ENCODE measurements at regions of chr15 and their contacts with region 1.

Region 1: GRCh38 chr15:49235446-49236124 is 65.5 kb downstream of the GALK2 start:
- DNase-seq: peak in 7 of 10 donors; percentile 19 to 75 (median 44)
- H3K4me3 ChIP-seq: peak overlapping the region in 33 of 59 donors; percentile 3 to 49 (median 23)
- H3K27ac ChIP-seq: peak overlapping the region in 56 of 59 donors; percentile 8 to 86 (median 72)
- H3K27me3 ChIP-seq: no peaks in the 10 kb centered on the region
- CTCF ChIP-seq: peak; percentile 62 to 98 (median 86)

Region 2: DNA sequence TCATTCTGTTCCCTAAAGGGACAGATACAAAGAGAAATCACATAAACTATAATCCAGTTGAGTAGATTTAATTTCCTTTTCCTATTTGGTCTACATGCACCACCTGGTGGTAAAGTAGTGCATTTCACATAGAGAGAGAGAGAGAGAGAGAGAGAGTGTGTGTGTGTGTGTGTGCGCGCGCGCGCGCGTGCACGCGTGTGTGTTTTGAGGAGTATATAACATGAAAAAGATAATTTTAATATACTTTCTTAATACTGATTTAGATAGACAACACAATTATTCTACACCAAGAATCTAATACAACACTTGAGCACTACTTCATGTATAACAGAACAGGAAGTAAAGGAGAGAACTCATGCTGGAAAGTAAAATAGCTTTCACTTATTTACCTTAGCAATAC is 186.4 kb after region 1 on chr15:
- intact Hi-C with region 1: loop called (anchors 2 kb)
- DNase-seq: peak in 2 of 10 donors; percentile 27 to 29
- H3K4me3 ChIP-seq: peak overlapping the region in 39 of 59 donors; percentile 1 to 59 (median 29)
- H3K27ac ChIP-seq: peak overlapping the region in 1 of 59 donors; percentile 24
- H3K27me3 ChIP-seq: peaks cover 0 to 4% (median 0%) of the 10 kb centered on the region in 45 donors
- CTCF ChIP-seq: peak; percentile 35 to 93 (median 74)

Region 3: GRCh38 chr15:49901996-49902684 is 666.6 kb after region 1 on chr15:
- intact Hi-C with region 1: loop called in 1 of 2 experiments (anchors 5 kb)
- DNase-seq: no peak
- H3K4me3 ChIP-seq: peak overlapping the region in 13 of 59 donors; percentile 2 to 56 (median 18)
- H3K27ac ChIP-seq: peak overlapping the region; percentile 72 to 96 (median 90)
- H3K27me3 ChIP-seq: no peaks in the 10 kb centered on the region
- CTCF ChIP-seq: peak in 51 of 56 donors; percentile 21 to 68 (median 46)

Region 4: DNA sequence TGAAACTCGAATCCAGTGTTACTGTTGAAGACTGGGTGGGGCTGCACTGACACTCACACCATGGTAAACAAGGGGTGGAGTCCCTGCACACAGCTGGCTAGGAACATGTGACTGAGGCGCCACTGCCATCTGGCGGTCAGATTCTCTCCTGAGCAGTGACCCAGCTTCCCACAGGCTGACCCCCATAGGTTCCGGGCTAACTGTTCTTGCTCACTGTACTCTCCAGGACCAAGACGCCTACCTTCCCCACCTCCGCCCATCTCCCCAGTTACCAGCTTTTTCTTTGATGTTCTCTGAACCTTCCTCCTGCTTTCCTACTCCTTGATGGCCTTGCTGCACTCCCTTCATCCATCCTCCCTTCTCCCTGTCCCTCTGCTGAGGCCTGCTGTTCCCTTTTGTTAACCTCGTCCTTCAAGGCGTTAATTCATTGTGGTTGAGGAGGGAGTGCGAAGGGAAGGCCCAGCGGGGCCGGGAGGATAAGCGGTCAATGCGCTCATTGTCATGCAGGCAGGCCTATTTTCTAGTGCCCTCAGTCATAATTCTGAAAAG is 768.3 kb after region 1 on chr15:
- intact Hi-C with region 1: loop called (anchors 5 to 10 kb)
- DNase-seq: peak in 9 of 10 donors; percentile 78 to 93 (median 86)
- H3K4me3 ChIP-seq: peak overlapping the region in 3 of 59 donors; percentile 7 to 16 (median 9)
- H3K27ac ChIP-seq: peak overlapping the region in 57 of 59 donors; percentile 53 to 96 (median 90)
- H3K27me3 ChIP-seq: no peaks in the 10 kb centered on the region
- CTCF ChIP-seq: peak in 55 of 56 donors; percentile 41 to 87 (median 72)

Region 5: GRCh38 chr15:50051803-50052419 is 816.3 kb after region 1 on chr15:
- intact Hi-C with region 1: loop called in 1 of 2 experiments (anchors 5 kb)
- DNase-seq: peak in 7 of 10 donors; percentile 11 to 77 (median 45)
- H3K4me3 ChIP-seq: peak overlapping the region in 1 of 59 donors; percentile 14
- H3K27ac ChIP-seq: peak overlapping the region in 21 of 59 donors; percentile 0 to 62 (median 37)
- H3K27me3 ChIP-seq: no peaks in the 10 kb centered on the region
- CTCF ChIP-seq: peak; percentile 46 to 89 (median 73)

Region 6: GRCh38 chr15:50145451-50145872 is 909.9 kb after region 1 on chr15:
- intact Hi-C with region 1: loop called (anchors 2 to 5 kb)
- DNase-seq: no peak
- H3K4me3 ChIP-seq: peak overlapping the region in 1 of 59 donors; percentile 3
- H3K27ac ChIP-seq: no peak overlapping the region
- H3K27me3 ChIP-seq: no peaks in the 10 kb centered on the region
- CTCF ChIP-seq: peak; percentile 49 to 91 (median 74)